ENCODE measurements at regions of chr18 and their contacts with region 1.

Region 1: DNA sequence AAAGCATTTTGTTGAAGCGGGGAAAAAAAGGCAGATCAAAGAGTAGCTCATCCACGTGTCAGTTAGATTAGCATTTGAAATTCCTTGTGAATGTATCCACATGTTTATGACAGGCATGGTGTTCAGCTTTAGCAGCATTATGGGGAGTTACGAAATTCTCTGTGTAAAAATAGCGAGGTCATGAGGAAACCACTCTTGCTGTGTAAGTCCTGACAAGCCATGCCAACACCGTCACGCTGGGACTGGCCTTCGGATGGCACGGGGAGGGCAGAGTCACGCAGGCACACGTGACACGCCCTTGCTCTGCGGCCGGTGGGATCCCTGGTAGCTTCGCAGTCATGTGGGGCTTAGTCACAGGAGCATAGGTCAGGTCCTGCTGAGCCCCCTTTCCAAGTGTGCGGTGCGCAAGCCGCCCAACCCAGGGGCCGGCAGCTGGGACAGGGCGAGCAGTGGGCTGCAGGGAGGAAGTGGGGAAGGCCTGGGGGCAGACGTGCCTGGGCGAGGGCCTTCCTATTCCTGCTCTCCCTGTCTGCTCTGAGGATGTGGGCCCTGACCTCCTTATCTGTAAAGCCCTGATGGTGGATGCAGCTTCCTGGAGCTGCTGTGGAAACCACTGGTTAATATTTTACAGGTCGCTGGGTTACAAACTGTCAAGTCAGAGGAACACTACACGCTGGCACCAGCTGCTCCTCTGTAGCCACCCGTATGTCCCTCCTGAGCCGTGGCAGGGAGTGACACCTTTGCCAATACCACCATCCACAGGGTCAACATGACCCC is 18.0 kb downstream of the MBP start:
- DNase-seq: peak in 3 of 4 donors; percentile 71 to 96 (median 95)
- ATAC-seq: peak; percentile 86
- H3K4me3 ChIP-seq: peak overlapping the region in 1 of 2 donors; percentile 4
- H3K27ac ChIP-seq: peak overlapping the region; percentile 90 to 96
- H3K4me1 ChIP-seq: peaks cover 23 to 59% of the 10 kb centered on the region in 2 donors
- H3K27me3 ChIP-seq: no peaks in the 10 kb centered on the region
- CTCF ChIP-seq: no peak

Region 2: GRCh38 chr18:76426737-76427305 is 687.8 kb before region 1 on chr18:
- intact Hi-C with region 1: no loop called
- DNase-seq: peak in 2 of 4 donors; percentile 56 to 82
- ATAC-seq: peak; percentile 72
- H3K4me3 ChIP-seq: no peak overlapping the region
- H3K27ac ChIP-seq: no peak overlapping the region
- H3K4me1 ChIP-seq: peaks cover 3 to 44% of the 10 kb centered on the region in 2 donors
- H3K27me3 ChIP-seq: no peaks in the 10 kb centered on the region
- CTCF ChIP-seq: peak; percentile 62 to 66

Region 3: GRCh38 chr18:77067291-77068061 is 47.1 kb before region 1 on chr18:
- intact Hi-C with region 1: loop called in 1 of 2 experiments (anchors 10 kb)
- DNase-seq: peak in 2 of 4 donors; percentile 78 to 92
- ATAC-seq: peak; percentile 69
- H3K4me3 ChIP-seq: no peak overlapping the region
- H3K27ac ChIP-seq: peak overlapping the region; percentile 68 to 97
- H3K4me1 ChIP-seq: peaks cover 22 to 99% of the 10 kb centered on the region in 2 donors
- H3K27me3 ChIP-seq: no peaks in the 10 kb centered on the region
- CTCF ChIP-seq: no peak